OCI-LY7 (cell line): ENCODE measurements at regions of chr19 and their contacts with region 1.

Region 1: DNA sequence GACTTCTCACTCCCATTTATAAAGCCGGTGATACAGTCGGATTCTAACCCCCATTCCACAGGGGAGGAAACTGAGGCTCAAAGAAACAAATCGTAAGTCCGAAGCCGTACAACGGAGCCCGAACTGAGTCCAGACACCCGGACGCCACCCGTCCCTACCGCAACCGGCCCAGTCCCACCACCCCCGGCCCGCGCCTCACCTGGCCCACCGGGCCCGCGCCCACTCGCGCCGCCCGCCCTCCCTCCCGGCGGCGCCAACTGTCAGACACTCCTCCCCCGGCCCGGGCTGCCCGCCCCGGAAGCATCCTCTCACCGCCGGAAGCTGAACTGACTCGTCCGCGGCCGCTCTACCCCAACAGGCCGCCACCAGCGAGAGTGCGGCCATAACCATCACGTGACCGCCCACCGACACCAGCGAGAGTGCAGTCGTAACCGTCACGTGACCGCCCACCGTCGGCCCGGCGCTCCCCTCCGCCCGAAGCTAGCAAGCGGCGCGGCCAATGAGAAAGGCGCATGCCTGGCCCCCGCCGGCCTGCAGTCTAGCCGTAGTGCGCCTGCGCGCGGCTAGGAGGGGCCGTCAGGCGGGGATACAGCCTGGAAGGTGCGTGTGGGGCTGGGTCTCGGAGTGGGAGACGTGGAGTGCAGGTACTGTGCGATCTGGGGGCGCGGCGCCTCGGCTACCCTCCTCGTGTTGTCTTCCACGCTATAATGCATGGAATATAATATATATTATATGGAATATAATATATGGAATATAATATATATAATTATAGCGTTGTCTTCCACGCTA is at the starts of genes C19orf47 and PLD3:
- DNase-seq: peak; percentile 99
- H3K4me3 ChIP-seq: peak within 1 kb of the TSS; percentile 95
- H3K27ac ChIP-seq: peak within 1 kb of the TSS; percentile 58
- H3K4me1 ChIP-seq: peaks cover 13% of the 10 kb centered on the region
- CTCF ChIP-seq: no peak
- total RNA-seq, gene C19orf47: 10.0 and 15.6 TPM in 2 replicates
- total RNA-seq, gene PLD3: 84.0 and 109 TPM in 2 replicates

Region 2: GRCh38 chr19:40285353-40286234 is 62.7 kb before region 1 on chr19:
- CTCF ChIA-PET with region 1: no interaction called
- POLR2A ChIA-PET with region 1: no interaction called
- intact Hi-C with region 1: loop called (anchors 5 kb)
- DNase-seq: peak; percentile 100
- H3K4me3 ChIP-seq: peak overlapping the region; percentile 85
- H3K27ac ChIP-seq: peak overlapping the region; percentile 94
- H3K4me1 ChIP-seq: peaks cover 54% of the 10 kb centered on the region
- CTCF ChIP-seq: no peak

Region 3: GRCh38 chr19:40365613-40366401 is 17.5 kb after region 1 on chr19:
- CTCF ChIA-PET with region 1: no interaction called
- POLR2A ChIA-PET with region 1: interaction called, 4 read pairs
- intact Hi-C with region 1: loop called (anchors 1 kb)
- DNase-seq: peak; percentile 79
- H3K4me3 ChIP-seq: peak overlapping the region; percentile 57
- H3K27ac ChIP-seq: no peak overlapping the region
- H3K4me1 ChIP-seq: peaks cover 12% of the 10 kb centered on the region
- CTCF ChIP-seq: no peak

Region 4: DNA sequence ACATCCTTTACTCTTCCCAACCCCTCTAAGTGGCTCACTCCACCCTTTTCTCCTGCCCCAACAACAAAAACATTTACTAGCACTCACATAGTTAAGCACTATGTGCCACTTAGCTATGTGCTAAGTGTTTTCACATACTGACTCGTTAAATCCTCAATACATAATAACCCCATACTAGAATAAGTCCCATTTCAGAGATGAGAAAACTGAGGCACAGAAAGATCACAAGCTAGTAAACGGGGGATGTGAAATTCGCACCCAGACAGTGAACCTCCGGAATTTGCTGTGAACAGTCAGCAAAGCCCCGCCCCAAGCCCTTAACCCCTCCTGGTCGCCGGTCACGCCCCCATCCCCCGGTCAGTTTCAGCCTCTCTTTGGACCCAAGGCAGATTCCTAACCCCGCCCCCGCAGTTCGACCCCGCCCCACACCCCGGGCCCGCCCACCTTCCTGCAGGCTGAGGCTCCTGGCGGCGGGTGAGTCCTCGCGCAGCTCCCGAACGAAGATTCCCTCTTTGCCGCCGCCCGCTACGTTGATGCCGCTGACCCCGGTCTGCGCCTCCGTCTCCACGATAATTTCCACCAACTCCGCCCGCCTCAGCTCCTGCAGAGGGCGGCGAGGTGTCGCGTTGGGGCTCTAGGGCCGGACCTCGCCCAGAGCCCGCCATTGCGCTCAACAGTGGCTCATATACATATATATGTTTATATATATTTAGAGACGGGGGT is 55.1 kb after region 1 on chr19:
- CTCF ChIA-PET with region 1: no interaction called
- POLR2A ChIA-PET with region 1: interaction called, 5 read pairs
- intact Hi-C with region 1: loop called (anchors 5 kb)
- DNase-seq: peak; percentile 93
- H3K4me3 ChIP-seq: peak overlapping the region; percentile 73
- H3K27ac ChIP-seq: peak overlapping the region; percentile 66
- H3K4me1 ChIP-seq: peaks cover 28% of the 10 kb centered on the region
- CTCF ChIP-seq: no peak

Region 5: DNA sequence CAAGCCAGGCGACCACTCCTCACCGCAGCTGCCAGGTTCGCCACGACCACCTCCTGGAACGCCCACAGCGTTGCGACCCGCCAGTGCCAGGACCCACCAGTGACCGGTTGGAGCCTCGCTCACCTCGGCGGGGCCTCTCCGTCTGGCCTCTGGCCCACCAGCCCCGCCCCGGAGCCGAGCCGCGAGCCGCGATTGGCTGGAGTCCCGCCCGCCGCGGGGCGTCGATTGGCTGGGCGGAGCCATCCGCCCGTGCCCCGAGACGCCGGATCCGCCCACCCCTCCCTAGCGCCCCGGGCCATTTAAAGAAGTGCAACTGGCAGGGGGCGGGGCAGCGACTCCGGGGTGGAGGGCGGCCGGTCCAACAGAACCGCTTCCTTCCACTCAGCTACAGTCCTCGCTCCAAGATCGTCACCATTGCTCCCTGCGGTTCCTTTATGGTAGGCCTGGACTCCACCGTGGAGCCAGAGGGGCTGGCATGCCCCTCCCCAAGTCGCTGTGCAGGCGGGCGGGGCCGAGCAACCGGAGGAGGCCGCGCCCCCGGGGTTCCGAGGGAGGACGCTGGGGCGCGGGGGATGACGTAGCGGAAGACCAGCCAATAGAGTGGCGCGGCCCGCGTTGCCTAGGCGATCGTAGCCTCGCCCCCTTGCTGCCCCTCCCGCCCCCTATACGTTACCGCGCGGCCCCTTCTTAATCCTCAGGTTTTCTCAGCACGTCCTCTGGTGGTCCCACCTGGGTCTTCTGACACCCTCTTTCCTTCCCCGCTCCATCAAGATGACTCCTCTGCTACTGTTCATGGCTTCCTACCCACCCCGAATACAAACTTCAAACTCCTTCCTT is 96.1 kb after region 1 on chr19 and contains the start of gene SERTAD3:
- CTCF ChIA-PET with region 1: no interaction called
- POLR2A ChIA-PET with region 1: interaction called, 3 read pairs
- intact Hi-C with region 1: loop called (anchors 1 kb)
- DNase-seq: peak; percentile 98
- H3K4me3 ChIP-seq: peak within 1 kb of the TSS; percentile 85
- H3K27ac ChIP-seq: peak within 1 kb of the TSS; percentile 88
- H3K4me1 ChIP-seq: peaks cover 21% of the 10 kb centered on the region
- CTCF ChIP-seq: peak; percentile 72
- total RNA-seq, gene SERTAD3: 12.2 and 15.7 TPM in 2 replicates

Region 6: GRCh38 chr19:40603389-40604135 is 255.2 kb after region 1 on chr19:
- CTCF ChIA-PET with region 1: no interaction called
- POLR2A ChIA-PET with region 1: no interaction called
- intact Hi-C with region 1: loop called (anchors 2 kb)
- DNase-seq: peak; percentile 98
- H3K4me3 ChIP-seq: peak overlapping the region; percentile 66
- H3K27ac ChIP-seq: no peak overlapping the region
- H3K4me1 ChIP-seq: peaks cover 62% of the 10 kb centered on the region
- CTCF ChIP-seq: no peak